ENCODE measurements at regions of chr1 and their contacts with region 1.

Region 1: DNA sequence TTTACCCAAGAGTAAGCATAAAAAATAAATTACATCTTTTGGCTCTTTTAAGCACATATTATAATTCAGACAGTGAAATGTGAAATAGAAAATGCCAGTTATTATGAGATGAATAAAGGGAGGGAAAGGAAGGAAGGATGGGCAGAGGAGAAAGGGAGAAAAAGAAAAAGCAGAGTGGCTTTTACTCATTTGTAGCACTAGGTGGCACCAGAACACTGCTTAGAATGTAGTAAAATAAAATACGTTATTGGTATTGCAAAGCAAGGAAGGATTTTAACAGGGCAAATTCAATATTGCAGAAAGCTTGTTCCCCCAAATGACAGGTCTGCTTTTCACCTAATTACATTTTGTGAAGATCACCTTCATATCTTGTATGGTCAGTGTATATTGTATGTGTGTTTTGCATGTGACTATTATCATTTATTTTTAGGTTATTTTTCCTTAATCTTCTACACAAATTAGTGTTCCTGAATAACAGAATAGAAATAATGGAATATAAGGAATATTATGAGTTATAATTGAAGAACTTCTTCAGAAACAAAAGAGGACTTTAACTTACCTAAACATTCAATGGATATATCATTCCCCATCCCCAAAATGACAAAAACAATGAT is 9.1 kb upstream of the PCNX2 start:
- DNase-seq: no peak
- CTCF ChIP-seq: peak; percentile 76

Region 2: GRCh38 chr1:233319272-233319671 is 14.7 kb after region 1 on chr1:
- CTCF ChIA-PET with region 1: interaction called, 20 read pairs
- POLR2A ChIA-PET with region 1: no interaction called
- DNase-seq: no peak
- CTCF ChIP-seq: no peak

Region 3: DNA sequence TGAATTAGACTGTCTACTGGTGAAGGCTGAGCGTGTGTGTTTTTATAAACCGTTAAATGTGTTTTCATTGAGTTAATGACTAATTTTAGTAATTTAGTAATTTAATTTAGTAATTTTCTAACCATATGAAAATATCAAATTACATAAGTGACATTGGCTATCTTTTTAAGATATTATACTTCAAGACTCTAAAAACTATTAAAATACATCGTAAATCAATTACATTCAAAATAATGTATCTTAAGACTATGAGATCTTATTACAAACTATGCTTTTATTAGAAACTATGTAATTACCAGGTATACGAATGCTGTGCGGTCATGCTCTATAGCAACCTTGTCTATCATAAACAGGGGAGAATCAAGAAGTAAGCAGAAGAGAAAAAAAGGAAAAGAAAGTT is 44.5 kb after region 1 on chr1:
- CTCF ChIA-PET with region 1: no interaction called
- POLR2A ChIA-PET with region 1: no interaction called
- DNase-seq: no peak
- CTCF ChIP-seq: no peak

Measured in GM10248 (cell line).